AG04450 (cell line): ENCODE measurements at regions of chr11 and their contacts with region 1.

Region 1: DNA sequence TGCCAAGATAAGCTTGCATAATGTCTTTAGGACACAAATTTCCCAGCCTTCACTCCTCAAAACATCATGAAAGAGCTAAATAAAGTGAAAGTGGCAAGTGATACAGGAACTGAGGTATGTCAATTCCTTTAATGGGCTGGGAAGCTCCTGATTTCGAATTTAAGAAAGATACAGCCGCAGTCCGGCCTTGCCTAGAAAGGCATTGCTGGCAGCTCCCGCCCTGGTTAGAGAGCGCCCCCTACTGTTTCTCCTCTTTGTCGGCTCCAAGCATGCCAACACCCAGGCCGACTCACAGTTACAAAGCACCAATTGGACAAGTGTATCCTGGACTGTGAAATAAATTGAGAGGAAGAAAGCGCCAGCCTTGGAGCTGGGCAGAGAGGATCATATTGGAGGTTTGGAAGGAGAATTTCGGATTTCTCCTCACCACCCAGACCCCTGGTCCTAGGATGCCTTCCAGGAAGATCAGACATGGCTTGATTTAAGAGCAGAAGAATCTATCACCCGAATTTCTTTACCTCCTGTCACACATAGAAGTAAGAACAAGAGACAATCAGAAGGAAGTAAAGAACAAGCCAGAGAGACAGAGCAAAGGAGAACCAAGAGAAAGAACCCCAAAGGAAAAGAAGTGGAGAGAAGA is 84.0 kb downstream of the FAM76B start:
- DNase-seq: peak; percentile 73
- H3K4me3 ChIP-seq: no peak overlapping the region
- H3K27ac ChIP-seq: no peak overlapping the region
- H3K27me3 ChIP-seq: peaks cover 3% of the 10 kb centered on the region
- CTCF ChIP-seq: peak; percentile 99

Region 2: GRCh38 chr11:95175818-95176368 is 529.7 kb before region 1 on chr11:
- CTCF ChIA-PET with region 1: interaction called, 14 read pairs
- POLR2A ChIA-PET with region 1: no interaction called
- DNase-seq: no peak
- H3K4me3 ChIP-seq: no peak overlapping the region
- H3K27ac ChIP-seq: no peak overlapping the region
- H3K27me3 ChIP-seq: no peaks in the 10 kb centered on the region
- CTCF ChIP-seq: no peak

Region 3: GRCh38 chr11:95254131-95254704 is 451.4 kb before region 1 on chr11:
- CTCF ChIA-PET with region 1: interaction called, 16 read pairs
- POLR2A ChIA-PET with region 1: no interaction called
- DNase-seq: peak; percentile 73
- H3K4me3 ChIP-seq: peak overlapping the region; percentile 54
- H3K27ac ChIP-seq: no peak overlapping the region
- H3K27me3 ChIP-seq: peaks cover 2% of the 10 kb centered on the region
- CTCF ChIP-seq: no peak

Region 4: DNA sequence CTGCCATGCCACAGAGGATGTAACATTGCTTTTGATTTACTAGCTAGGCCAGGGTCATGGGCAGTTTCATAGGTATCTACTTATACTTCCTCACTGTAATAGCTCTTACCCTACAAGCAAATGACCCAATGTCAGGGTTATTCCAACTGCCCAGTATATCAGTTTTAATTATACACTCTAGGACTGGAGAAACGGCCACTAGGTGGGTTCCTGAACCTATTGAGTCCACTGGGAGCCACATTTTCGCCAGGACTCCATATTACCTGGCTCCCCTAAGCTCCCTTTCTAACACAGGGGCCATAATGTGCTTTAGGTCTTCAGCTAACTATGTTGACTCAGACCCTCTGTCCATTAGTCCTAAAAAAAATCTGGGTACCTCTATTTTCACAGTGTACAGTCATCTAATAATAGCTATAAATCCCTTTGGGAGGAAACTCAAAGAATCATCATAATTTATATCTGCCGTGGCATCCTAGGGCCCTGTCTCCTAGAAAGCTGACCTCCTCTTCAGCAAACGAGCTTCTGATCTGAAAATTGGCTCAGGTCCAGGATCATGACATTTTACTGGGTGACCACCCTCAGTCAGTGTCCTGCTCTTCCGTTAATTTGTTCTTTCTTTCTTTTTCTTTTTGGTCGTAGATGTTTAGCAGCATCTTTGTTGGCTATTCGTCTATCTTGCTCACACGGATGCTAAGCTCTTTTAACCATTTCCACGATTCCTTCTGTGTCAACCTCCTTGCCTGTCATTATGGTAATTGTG is 160.3 kb before region 1 on chr11:
- CTCF ChIA-PET with region 1: interaction called, 24 read pairs
- POLR2A ChIA-PET with region 1: no interaction called
- DNase-seq: no peak
- H3K4me3 ChIP-seq: no peak overlapping the region
- H3K27ac ChIP-seq: no peak overlapping the region
- H3K27me3 ChIP-seq: no peaks in the 10 kb centered on the region
- CTCF ChIP-seq: peak; percentile 19; the same call in 1 of the 2 replicates

Region 5: GRCh38 chr11:95692526-95693260 is 12.9 kb before region 1 on chr11:
- CTCF ChIA-PET with region 1: interaction called, 74 read pairs
- POLR2A ChIA-PET with region 1: no interaction called
- DNase-seq: no peak
- H3K4me3 ChIP-seq: no peak overlapping the region
- H3K27ac ChIP-seq: peak overlapping the region; percentile 48
- H3K27me3 ChIP-seq: no peaks in the 10 kb centered on the region
- CTCF ChIP-seq: no peak

Region 6: GRCh38 chr11:95736355-95736754 is 30.8 kb after region 1 on chr11:
- CTCF ChIA-PET with region 1: interaction called, 10 read pairs
- POLR2A ChIA-PET with region 1: no interaction called
- DNase-seq: no peak
- H3K4me3 ChIP-seq: no peak overlapping the region
- H3K27ac ChIP-seq: no peak overlapping the region
- H3K27me3 ChIP-seq: no peaks in the 10 kb centered on the region
- CTCF ChIP-seq: no peak